ENCODE measurements at regions of chr17 and their contacts with region 1.

Region 1: DNA sequence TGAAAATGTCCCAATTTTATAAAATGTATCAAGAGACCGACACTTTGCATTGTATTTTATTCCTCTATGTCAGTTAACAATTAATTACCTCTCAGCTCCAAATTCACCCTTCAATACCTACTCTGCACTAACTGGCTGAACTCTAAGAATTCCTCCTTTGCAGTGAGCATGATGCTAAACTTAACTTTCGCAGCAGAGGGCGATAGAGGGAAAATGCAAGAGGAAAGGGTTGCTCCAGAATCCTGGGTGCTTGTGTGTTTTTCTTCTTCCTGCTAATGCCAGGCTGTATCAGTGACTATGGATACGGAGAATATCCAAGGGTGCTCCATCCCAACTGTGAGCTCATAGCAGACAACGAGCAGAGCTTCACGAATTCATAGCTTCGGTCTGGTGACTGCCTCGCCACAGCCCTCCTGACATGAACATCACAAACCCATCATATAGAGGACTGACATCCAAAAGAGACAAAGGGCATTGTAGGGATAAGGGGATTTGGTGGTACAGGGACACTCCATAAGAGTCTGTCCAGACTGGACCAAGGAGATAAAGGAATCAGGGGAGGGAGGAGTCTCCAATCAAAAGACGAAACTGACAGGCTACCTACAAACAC is 172.9 kb downstream of the STX8 start:
- DNase-seq: peak; percentile 84
- H3K4me3 Mint-ChIP-seq: no peak overlapping the region
- H3K27ac Mint-ChIP-seq: no peak overlapping the region
- H3K4me1 Mint-ChIP-seq: peaks cover 2% of the 10 kb centered on the region
- H3K27me3 Mint-ChIP-seq: no peaks in the 10 kb centered on the region

Region 2: DNA sequence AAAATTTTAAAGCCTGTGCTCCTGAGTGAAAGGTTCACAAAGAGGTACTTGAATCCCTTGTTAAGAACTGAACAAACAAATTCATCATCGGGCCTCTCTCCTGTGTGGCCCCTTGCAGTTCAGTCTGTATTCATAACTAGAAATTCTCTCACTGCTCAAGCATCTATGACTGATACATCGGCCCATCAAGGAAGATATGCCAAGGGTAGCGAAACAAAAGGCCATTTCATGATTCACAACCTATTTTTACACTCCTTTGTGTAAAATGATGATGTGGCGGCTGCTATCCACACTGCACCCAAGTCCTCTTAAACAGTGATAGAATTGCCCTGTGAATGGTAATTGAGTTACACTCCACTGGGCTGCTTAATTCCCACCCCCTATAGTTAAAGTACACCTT is 31.7 kb before region 1 on chr17:
- intact Hi-C with region 1: no loop called
- DNase-seq: no peak
- H3K4me3 Mint-ChIP-seq: no peak overlapping the region
- H3K27ac Mint-ChIP-seq: no peak overlapping the region
- H3K4me1 Mint-ChIP-seq: no peaks in the 10 kb centered on the region
- H3K27me3 Mint-ChIP-seq: no peaks in the 10 kb centered on the region

Region 3: GRCh38 chr17:9432134-9432885 is 29.6 kb after region 1 on chr17:
- intact Hi-C with region 1: no loop called
- DNase-seq: no peak
- H3K4me3 Mint-ChIP-seq: no peak overlapping the region
- H3K27ac Mint-ChIP-seq: no peak overlapping the region
- H3K4me1 Mint-ChIP-seq: peaks cover 11% of the 10 kb centered on the region
- H3K27me3 Mint-ChIP-seq: no peaks in the 10 kb centered on the region

Region 4: GRCh38 chr17:9522074-9522473 is 119.4 kb after region 1 on chr17:
- intact Hi-C with region 1: loop called (anchors 2 kb)
- DNase-seq: peak; percentile 68
- H3K4me3 Mint-ChIP-seq: no peak overlapping the region
- H3K27ac Mint-ChIP-seq: no peak overlapping the region
- H3K4me1 Mint-ChIP-seq: peaks cover 11% of the 10 kb centered on the region
- H3K27me3 Mint-ChIP-seq: no peaks in the 10 kb centered on the region

Region 5: DNA sequence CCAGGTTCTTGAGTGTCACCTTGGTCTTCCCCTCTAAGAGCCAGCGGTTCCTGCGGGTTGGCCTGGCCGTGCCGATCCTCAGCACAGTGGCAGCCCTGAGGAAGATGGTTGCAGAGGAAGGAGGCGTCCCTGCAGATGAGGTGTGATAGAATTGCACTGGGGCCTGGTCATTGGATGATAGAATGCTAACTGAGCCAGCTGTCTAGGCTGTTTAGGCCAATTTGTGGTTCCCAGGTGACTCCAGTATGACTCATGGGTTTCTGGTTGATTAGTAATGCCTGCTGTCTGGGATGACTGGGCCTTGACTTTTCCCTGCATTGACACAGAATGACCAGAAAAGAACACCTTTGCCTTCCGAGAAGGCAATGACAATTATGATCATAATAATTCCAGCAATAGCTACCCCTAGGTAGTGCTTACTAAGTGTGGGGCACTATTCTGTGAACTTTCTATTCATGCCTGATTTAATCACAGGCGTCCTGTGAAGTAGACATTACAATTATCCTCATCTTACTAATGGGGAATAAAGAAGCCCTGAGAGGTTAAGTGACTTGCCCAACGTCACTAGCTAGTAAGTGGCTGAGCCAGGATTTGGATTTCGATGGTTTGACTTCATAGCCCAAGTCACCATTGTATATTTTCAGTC is 274.2 kb after region 1 on chr17:
- intact Hi-C with region 1: no loop called
- DNase-seq: no peak
- H3K4me3 Mint-ChIP-seq: no peak overlapping the region
- H3K27ac Mint-ChIP-seq: no peak overlapping the region
- H3K4me1 Mint-ChIP-seq: no peaks in the 10 kb centered on the region
- H3K27me3 Mint-ChIP-seq: peaks cover 2% of the 10 kb centered on the region

Measured in activated CD4-positive, alpha-beta T cell treated with anti-CD3 and anti-CD28 coated beads, Interleukin-2, amount 10 ng/mL, durations not matched to agents 24 days and 14 days (primary cell).